ENCODE measurements at regions of chr15 and their contacts with region 1.

Region 1: DNA sequence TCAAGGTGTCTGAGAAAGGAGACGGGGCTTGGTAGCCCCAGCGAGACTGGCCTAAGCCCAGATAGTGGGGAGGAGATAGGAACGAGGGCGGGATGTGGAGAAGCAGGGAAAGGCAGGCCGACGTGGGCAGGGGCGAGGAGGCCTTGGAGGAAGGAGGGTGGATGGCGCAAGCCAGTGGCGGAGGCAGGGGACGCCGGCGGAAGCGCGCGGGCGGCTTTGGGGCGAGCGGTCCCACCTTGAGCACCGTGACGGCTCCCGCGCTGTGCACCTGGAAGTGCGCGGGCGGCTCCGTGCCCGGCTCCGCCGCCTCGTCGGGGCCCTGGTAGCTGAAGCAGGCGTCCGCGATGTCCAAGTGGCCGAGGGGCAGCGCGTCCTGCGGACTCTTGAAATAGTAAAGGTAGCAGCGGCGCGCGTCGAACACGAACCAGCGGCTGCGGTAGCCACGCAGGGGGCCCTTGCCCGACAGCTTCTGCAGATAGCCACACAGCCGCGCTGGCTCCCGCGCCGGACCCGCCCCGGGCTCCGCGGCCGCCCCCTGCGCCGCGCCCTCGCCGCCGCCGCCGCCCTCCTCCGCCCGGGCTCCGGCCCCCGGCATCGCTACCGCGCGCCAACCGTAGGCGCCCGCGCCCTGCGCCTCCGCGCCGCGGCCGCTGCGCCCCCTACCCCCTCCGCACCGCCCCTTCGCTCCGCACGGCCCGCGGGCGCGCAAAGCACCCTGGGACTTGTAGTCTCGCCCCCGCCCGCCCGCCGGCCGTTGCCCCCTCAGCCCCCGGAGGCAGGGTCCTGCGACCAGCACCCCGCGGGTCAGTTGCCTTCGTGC is at the start of gene TBC1D2B:
- DNase-seq: peak; percentile 65 to 71 (median 68)
- H3K4me3 ChIP-seq: peak within 1 kb of the TSS; percentile 59 to 89
- H3K4me3 Mint-ChIP-seq: peak within 1 kb of the TSS; percentile 93 to 100 (median 99)
- H3K27ac ChIP-seq: peak within 1 kb of the TSS; percentile 83
- H3K27ac Mint-ChIP-seq: peak within 1 kb of the TSS; percentile 89 to 99 (median 97)
- H3K4me1 ChIP-seq: peaks cover 45% of the 10 kb centered on the region
- H3K4me1 Mint-ChIP-seq: peaks cover 31 to 61% (median 46%) of the 10 kb centered on the region in 4 donors
- H3K27me3 ChIP-seq: no peaks in the 10 kb centered on the region
- H3K27me3 Mint-ChIP-seq: no peaks in the 10 kb centered on the region
- total RNA-seq, gene TBC1D2B: 98.1 to 114 TPM

Region 2: DNA sequence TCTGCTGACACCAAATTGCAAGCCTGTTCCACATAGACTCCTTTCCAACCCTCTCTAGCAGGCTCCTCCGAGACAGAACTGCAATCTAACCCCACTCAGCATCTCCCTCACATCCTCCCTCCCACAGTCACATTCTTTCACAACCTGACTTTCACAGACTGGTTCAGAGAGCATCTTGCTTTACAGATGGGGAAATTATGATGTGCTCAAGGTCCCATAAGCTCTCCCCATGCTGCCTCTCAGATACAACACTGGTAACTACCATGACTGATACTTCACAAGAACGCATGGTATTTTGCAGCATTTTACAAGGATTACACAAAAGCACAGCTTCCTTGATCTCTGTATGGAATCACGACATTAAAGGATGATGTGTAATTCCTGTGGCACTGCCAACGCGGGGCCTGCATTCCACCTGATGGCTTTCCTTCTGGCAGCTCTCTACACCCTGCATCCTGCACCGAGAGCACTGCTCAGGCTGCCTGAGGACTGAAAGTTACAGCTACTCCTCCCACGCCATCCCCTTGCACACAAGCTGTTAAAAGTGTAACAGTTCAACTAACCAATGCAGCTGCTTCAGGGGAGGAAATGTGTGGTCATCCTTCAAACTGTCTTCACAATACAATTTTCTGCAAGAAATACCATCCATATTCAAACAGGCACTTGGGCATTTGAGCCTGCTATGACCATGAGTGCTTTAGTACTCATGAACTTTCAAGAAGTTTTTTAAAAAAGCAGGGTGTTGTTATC is 27.4 kb before region 1 on chr15:
- CTCF ChIA-PET with region 1: interaction called, 21 read pairs
- POLR2A ChIA-PET with region 1: interaction called, 984 read pairs
- intact Hi-C with region 1: loop called (anchors 1 kb)
- DNase-seq: peak; percentile 54 to 72 (median 62)
- H3K4me3 ChIP-seq: peak overlapping the region in 1 of 2 donors; percentile 35
- H3K4me3 Mint-ChIP-seq: peak overlapping the region; percentile 63 to 86 (median 74)
- H3K27ac ChIP-seq: peak overlapping the region; percentile 68
- H3K27ac Mint-ChIP-seq: peak overlapping the region; percentile 86 to 98 (median 92)
- H3K4me1 ChIP-seq: peaks cover 100% of the 10 kb centered on the region
- H3K4me1 Mint-ChIP-seq: peaks cover 79 to 100% (median 92%) of the 10 kb centered on the region in 4 donors
- H3K27me3 ChIP-seq: no peaks in the 10 kb centered on the region
- H3K27me3 Mint-ChIP-seq: no peaks in the 10 kb centered on the region

Region 3: GRCh38 chr15:78449220-78449999 is 372.1 kb after region 1 on chr15:
- CTCF ChIA-PET with region 1: no interaction called
- POLR2A ChIA-PET with region 1: no interaction called
- intact Hi-C with region 1: no loop called
- DNase-seq: no peak
- H3K4me3 ChIP-seq: no peak overlapping the region
- H3K4me3 Mint-ChIP-seq: no peak overlapping the region
- H3K27ac ChIP-seq: no peak overlapping the region
- H3K27ac Mint-ChIP-seq: peak overlapping the region in 1 of 7 donors; percentile 15
- H3K4me1 ChIP-seq: peaks cover 38% of the 10 kb centered on the region
- H3K4me1 Mint-ChIP-seq: peaks cover 50 to 85% (median 68%) of the 10 kb centered on the region in 4 donors
- H3K27me3 ChIP-seq: no peaks in the 10 kb centered on the region
- H3K27me3 Mint-ChIP-seq: no peaks in the 10 kb centered on the region